Panc1 (cell line): ENCODE measurements at regions of chr9 and their contacts with region 1.

Region 1: GRCh38 chr9:116149844-116150243 is 3.7 kb upstream of the PAPPA start:
- DNase-seq: no peak
- ATAC-seq: no peak
- H3K4me3 ChIP-seq: no peak overlapping the region
- H3K27ac ChIP-seq: no peak overlapping the region
- H3K4me1 ChIP-seq: no peaks in the 10 kb centered on the region
- H3K27me3 ChIP-seq: peaks cover 2% of the 10 kb centered on the region; the same call in 1 of the 2 replicates
- CTCF ChIP-seq: peak; percentile 68

Region 2: GRCh38 chr9:114587385-114588202 is 1562.2 kb before region 1 on chr9 and contains the start of gene ATP6V1G1:
- CTCF ChIA-PET with region 1: no interaction called
- POLR2A ChIA-PET with region 1: interaction called, 14 read pairs
- in situ Hi-C with region 1: no loop called
- intact Hi-C with region 1: no loop called
- DNase-seq: peak; percentile 78
- ATAC-seq: peak; percentile 98
- H3K4me3 ChIP-seq: peak within 1 kb of the TSS; percentile 87
- H3K27ac ChIP-seq: peak within 1 kb of the TSS; percentile 94
- H3K4me1 ChIP-seq: peaks cover 5% of the 10 kb centered on the region
- H3K27me3 ChIP-seq: no peaks in the 10 kb centered on the region
- CTCF ChIP-seq: no peak
- total RNA-seq, gene ATP6V1G1: 71.8 TPM

Region 3: GRCh38 chr9:115591584-115591984 is 558.3 kb before region 1 on chr9:
- CTCF ChIA-PET with region 1: interaction called, 5 read pairs
- POLR2A ChIA-PET with region 1: no interaction called
- in situ Hi-C with region 1: no loop called
- intact Hi-C with region 1: loop called (anchors 10 kb)
- DNase-seq: peak; percentile 62
- ATAC-seq: peak; percentile 59
- H3K4me3 ChIP-seq: no peak overlapping the region
- H3K27ac ChIP-seq: no peak overlapping the region
- H3K4me1 ChIP-seq: peaks cover 6% of the 10 kb centered on the region
- H3K27me3 ChIP-seq: no peaks in the 10 kb centered on the region
- CTCF ChIP-seq: peak; percentile 28; the same call in 1 of the 2 replicates

Region 4: GRCh38 chr9:115883457-115884329 is 266.2 kb before region 1 on chr9:
- CTCF ChIA-PET with region 1: no interaction called
- POLR2A ChIA-PET with region 1: no interaction called
- in situ Hi-C with region 1: no loop called
- intact Hi-C with region 1: loop called (anchors 10 kb)
- DNase-seq: no peak
- ATAC-seq: no peak; the same call in 1 of the 2 replicates
- H3K4me3 ChIP-seq: no peak overlapping the region
- H3K27ac ChIP-seq: no peak overlapping the region
- H3K4me1 ChIP-seq: no peaks in the 10 kb centered on the region
- H3K27me3 ChIP-seq: no peaks in the 10 kb centered on the region
- CTCF ChIP-seq: peak; percentile 53

Region 5: DNA sequence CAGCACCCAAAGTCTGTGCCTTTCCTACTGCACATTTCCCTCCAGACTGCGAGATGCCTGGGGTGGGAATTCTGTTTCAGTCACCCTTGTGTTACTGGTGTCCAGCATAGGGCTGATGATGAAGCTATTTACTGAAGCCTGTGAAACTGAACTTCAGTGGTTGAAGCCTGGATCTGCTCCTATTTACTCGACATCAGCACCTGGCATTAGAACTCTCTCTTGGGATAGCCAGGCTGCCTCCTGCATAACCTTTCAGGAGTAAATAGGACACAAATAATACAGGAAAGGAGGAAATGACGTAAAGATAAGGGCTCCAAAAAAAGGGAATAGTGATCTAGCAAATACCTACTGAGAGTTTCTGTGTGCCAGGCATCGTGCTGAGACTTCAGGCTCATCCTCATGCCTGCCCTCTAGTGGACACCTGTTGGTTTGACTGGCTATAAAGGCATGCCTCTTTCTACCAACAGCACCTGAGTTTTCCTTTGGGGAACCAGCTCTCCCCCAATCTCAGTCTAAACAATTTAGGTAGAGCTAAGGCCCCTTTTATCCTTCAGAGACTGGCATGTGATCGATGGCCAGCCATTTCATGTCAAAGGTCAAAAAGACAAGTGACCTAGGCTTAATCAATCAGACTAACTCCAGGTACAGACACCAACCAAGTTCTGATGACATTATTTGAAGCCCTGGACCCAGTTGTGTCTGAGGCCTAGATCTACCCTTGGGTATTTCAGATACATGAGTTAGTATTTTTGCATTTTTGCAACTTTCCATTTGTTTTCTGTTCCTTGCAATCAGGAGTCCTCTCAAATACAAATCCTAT is 345.2 kb after region 1 on chr9:
- CTCF ChIA-PET with region 1: no interaction called
- POLR2A ChIA-PET with region 1: no interaction called
- in situ Hi-C with region 1: no loop called
- intact Hi-C with region 1: loop called (anchors 10 kb)
- DNase-seq: peak; percentile 13
- ATAC-seq: no peak
- H3K4me3 ChIP-seq: no peak overlapping the region
- H3K27ac ChIP-seq: no peak overlapping the region; the same call in 1 of the 2 replicates
- H3K4me1 ChIP-seq: no peaks in the 10 kb centered on the region; the same call in 1 of the 2 replicates
- H3K27me3 ChIP-seq: no peaks in the 10 kb centered on the region
- CTCF ChIP-seq: peak; percentile 70

Region 6: GRCh38 chr9:116572095-116572748 is 422.4 kb after region 1 on chr9:
- CTCF ChIA-PET with region 1: no interaction called
- POLR2A ChIA-PET with region 1: no interaction called
- in situ Hi-C with region 1: no loop called
- intact Hi-C with region 1: loop called (anchors 5 kb)
- DNase-seq: no peak
- ATAC-seq: peak; percentile 87
- H3K4me3 ChIP-seq: no peak overlapping the region
- H3K27ac ChIP-seq: no peak overlapping the region
- H3K4me1 ChIP-seq: peaks cover 6% of the 10 kb centered on the region; the same call in 1 of the 2 replicates
- H3K27me3 ChIP-seq: no peaks in the 10 kb centered on the region
- CTCF ChIP-seq: peak; percentile 80